Right ventricle myocardium inferior (tissue), 1 donor: ENCODE measurements at regions of chrX and their contacts with region 1.

Region 1: DNA sequence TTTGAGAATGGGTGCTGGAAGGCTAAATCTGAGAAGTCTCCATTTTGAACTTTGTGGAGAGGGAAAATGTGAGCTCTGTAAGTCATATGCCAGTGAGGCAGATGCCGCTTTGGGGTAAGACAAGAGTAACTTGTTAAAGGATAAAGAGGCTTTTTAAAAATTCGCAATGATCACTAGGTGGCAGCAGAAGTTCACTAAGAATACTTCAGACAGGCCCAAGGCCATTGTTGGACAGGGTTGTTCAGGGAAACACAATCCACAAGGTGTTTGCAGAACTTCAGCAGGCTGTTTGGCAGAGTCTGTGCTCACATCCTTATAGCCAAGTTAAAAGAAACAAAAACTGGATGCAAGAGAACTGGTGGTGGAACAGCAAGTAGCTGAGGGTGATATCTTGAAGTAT is 13.7 kb upstream of the PIGA start:
- DNase-seq: no peak
- ATAC-seq: peak; percentile 79

Region 2: DNA sequence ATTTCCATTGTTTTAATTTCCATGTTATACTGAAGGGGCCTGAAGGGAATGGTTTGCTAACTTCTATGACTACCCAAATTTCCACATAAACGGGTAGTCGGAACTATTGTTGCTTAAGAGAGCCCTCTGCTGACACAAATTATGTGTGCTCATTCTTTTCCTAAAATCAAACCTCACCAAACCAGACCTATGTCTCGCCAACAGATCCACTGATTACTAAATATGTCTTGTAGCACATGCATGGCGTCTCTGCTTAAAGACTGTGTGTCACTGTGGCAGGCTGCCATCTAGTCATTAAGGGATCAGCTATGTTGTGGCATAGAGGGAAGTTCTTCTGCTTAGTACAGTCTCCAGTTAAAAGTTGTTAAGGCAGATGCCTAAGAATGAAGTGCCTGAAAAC is 119.0 kb after region 1 on chrX:
- intact Hi-C with region 1: loop called (anchors 2 kb)
- DNase-seq: no peak
- ATAC-seq: peak; percentile 63

Region 3: DNA sequence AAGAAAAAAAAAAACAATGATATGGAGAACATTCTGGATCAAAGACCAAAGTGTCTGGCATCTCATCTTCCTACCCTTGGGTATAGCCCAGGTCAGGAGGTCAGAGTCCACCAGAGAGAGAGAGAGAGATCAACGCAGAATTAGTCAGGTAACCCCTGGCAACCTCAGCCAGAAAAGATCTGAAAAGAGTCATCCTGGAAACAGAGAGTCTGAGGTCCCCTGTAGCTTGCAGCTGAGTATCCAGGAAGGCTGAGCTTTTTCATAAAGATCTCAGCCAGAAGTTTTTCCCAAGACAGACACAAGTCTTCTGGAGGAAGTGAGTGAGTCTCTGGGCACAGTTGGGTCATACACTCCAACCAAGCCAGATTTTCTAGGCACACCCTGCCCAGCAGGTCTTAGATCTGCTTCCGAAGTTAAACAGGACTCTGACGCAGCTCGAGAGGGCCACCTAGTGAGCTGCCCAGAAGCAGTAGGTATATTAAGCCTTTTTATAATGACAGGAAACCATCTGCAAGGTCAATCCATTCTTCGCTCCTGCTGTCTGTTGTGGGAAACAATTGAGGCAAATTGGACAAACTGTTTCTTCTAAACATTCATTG is 216.0 kb after region 1 on chrX:
- intact Hi-C with region 1: loop called (anchors 10 kb)
- DNase-seq: peak; percentile 52
- ATAC-seq: peak; percentile 91